Gastrocnemius medialis (tissue), 4 donors: ENCODE measurements at regions of chrX and their contacts with region 1.

Region 1: DNA sequence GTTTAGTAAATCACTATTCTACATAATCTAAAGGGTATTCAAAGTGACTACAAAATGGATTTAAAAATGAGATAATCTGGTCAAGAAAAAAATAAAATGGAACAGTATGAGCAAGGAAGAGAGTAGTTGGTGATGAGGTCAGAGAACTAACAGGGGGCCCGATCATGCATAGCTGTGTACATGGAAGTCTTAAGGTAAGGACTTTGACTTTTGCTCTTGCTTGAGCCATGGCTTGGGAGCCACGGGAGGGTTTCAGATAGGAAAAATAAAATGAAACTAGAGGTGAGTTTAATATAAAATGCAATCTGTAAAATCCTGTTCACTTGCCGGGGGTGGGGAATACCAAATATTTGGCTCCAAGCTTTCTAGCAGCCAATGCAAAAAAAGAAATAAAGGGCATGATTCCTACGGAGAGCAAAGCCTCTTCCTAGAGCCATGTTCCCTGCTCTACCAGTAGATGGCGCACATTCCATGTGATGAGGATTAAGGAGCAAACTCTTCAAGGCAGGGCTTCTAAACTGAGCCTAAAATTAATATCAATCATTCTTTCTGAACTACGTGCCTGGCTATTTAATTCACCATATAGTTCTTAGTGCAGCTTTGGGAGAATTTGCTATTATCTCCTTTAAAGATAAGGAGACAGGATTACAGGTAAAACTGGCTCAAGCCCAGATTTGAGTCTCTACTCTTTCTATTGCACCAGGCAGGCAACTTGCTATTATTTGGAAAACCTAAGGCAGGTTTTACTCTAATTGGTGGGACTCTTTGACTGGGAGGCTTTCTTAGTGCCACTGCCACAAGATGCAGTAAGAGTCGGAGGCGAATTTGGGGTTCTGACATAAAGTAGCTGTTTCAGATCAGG is 6.8 kb upstream of the CLCN5 start:
- DNase-seq: peak in 1 of 2 donors; percentile 16
- ATAC-seq: peak; percentile 60 to 81
- H3K4me3 ChIP-seq: no peak overlapping the region
- H3K27ac ChIP-seq: no peak overlapping the region
- H3K4me1 ChIP-seq: no peaks in the 10 kb centered on the region
- H3K27me3 ChIP-seq: no peaks in the 10 kb centered on the region
- CTCF ChIP-seq: peak; percentile 47 to 86 (median 66)
- POLR2A ChIP-seq: no peak

Region 2: GRCh38 chrX:49618574-49618973 is 297.0 kb before region 1 on chrX:
- in situ Hi-C with region 1: no loop called
- intact Hi-C with region 1: no loop called
- DNase-seq: no peak
- ATAC-seq: no peak
- H3K4me3 ChIP-seq: no peak overlapping the region
- H3K27ac ChIP-seq: no peak overlapping the region
- H3K4me1 ChIP-seq: no peaks in the 10 kb centered on the region
- H3K27me3 ChIP-seq: no peaks in the 10 kb centered on the region
- CTCF ChIP-seq: no peak
- POLR2A ChIP-seq: no peak

Region 3: GRCh38 chrX:49784747-49785280 is 130.8 kb before region 1 on chrX:
- in situ Hi-C with region 1: no loop called
- intact Hi-C with region 1: no loop called
- DNase-seq: no peak
- ATAC-seq: no peak
- H3K4me3 ChIP-seq: no peak overlapping the region
- H3K27ac ChIP-seq: no peak overlapping the region
- H3K4me1 ChIP-seq: no peaks in the 10 kb centered on the region
- H3K27me3 ChIP-seq: no peaks in the 10 kb centered on the region
- CTCF ChIP-seq: no peak
- POLR2A ChIP-seq: no peak

Region 4: GRCh38 chrX:50081282-50081889 is 165.8 kb after region 1 on chrX:
- in situ Hi-C with region 1: loop called in 2 of 4 experiments (anchors 10 to 25 kb)
- intact Hi-C with region 1: no loop called
- DNase-seq: peak; percentile 2 to 23
- ATAC-seq: peak in 1 of 2 donors; percentile 46
- H3K4me3 ChIP-seq: no peak overlapping the region
- H3K27ac ChIP-seq: no peak overlapping the region
- H3K4me1 ChIP-seq: no peaks in the 10 kb centered on the region
- H3K27me3 ChIP-seq: no peaks in the 10 kb centered on the region
- CTCF ChIP-seq: peak in 1 of 5 experiments; percentile 44
- POLR2A ChIP-seq: no peak

Region 5: GRCh38 chrX:50100188-50100587 is 184.6 kb after region 1 on chrX:
- in situ Hi-C with region 1: loop called in 2 of 4 experiments (anchors 10 to 25 kb)
- intact Hi-C with region 1: no loop called
- DNase-seq: no peak
- ATAC-seq: no peak
- H3K4me3 ChIP-seq: no peak overlapping the region
- H3K27ac ChIP-seq: no peak overlapping the region
- H3K4me1 ChIP-seq: no peaks in the 10 kb centered on the region
- H3K27me3 ChIP-seq: no peaks in the 10 kb centered on the region
- CTCF ChIP-seq: peak in 3 of 5 experiments; percentile 9 to 30 (median 16)
- POLR2A ChIP-seq: no peak

Region 6: GRCh38 chrX:50204364-50204899 is 288.8 kb after region 1 on chrX and contains the start of gene CCNB3:
- in situ Hi-C with region 1: no loop called
- intact Hi-C with region 1: loop called (anchors 2 kb)
- DNase-seq: peak; percentile 24 to 60
- ATAC-seq: peak; percentile 70 to 97
- H3K4me3 ChIP-seq: peak within 1 kb of the TSS; percentile 41 to 52 (median 46)
- H3K27ac ChIP-seq: peak within 1 kb of the TSS in 3 of 4 donors; percentile 35 to 59 (median 53)
- H3K4me1 ChIP-seq: peaks cover 0 to 7% of the 10 kb centered on the region in 2 donors
- H3K27me3 ChIP-seq: no peaks in the 10 kb centered on the region
- CTCF ChIP-seq: peak in 4 of 5 experiments; percentile 35 to 62 (median 60)
- POLR2A ChIP-seq: peak in 1 of 2 donors; percentile 25
- total RNA-seq, gene CCNB3: 0.26 to 2.4 (median 0.57) TPM

Region 7: GRCh38 chrX:50579955-50580354 is 664.4 kb after region 1 on chrX:
- in situ Hi-C with region 1: loop called in 3 of 4 experiments (anchors 25 kb)
- intact Hi-C with region 1: loop called (anchors 5 kb)
- DNase-seq: no peak
- ATAC-seq: no peak
- H3K4me3 ChIP-seq: no peak overlapping the region
- H3K27ac ChIP-seq: no peak overlapping the region
- H3K4me1 ChIP-seq: no peaks in the 10 kb centered on the region
- H3K27me3 ChIP-seq: no peaks in the 10 kb centered on the region
- CTCF ChIP-seq: peak in 3 of 5 experiments; percentile 26 to 54 (median 30)
- POLR2A ChIP-seq: no peak